Endothelial cell of umbilical vein (primary cell): ENCODE measurements at regions of chr3 and their contacts with region 1.

Region 1: GRCh38 chr3:33372218-33373081 is 67.8 kb downstream of the UBP1 start:
- DNase-seq: peak; percentile 71
- H3K4me3 ChIP-seq: no peak overlapping the region
- H3K27ac ChIP-seq: no peak overlapping the region
- H3K4me1 ChIP-seq: peaks cover 6% of the 10 kb centered on the region
- H3K27me3 ChIP-seq: no peaks in the 10 kb centered on the region
- CTCF ChIP-seq: peak; percentile 81 to 82
- POLR2A ChIP-seq: no peak

Region 2: DNA sequence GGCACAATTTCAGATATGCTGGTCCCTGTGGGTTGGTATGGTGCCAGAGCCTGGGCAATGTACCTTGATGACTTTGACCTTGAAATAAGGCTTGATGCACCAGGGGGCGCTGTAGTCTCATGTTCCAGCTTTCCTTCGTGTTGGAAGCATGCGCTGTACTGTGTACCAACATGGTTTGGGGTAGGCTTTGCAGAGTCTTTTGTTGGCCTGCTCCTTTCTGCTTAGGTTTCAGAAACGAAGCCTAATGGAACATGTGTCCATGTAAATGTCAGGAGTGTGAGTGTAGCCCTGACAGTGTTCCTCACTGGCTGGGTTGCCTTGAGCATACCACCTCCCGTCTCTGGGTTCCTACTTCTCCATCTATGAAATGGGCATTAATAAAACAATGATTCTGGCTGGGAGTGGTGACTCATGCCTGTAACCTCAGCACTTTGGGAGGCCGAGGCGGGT is 424.6 kb before region 1 on chr3:
- CTCF ChIA-PET with region 1: interaction called, 45 read pairs
- POLR2A ChIA-PET with region 1: no interaction called
- dilution Hi-C with region 1: no loop called
- intact Hi-C with region 1: no loop called
- DNase-seq: peak; percentile 85
- H3K4me3 ChIP-seq: no peak overlapping the region
- H3K27ac ChIP-seq: no peak overlapping the region
- H3K4me1 ChIP-seq: peaks cover 5% of the 10 kb centered on the region
- H3K27me3 ChIP-seq: no peaks in the 10 kb centered on the region
- CTCF ChIP-seq: peak; percentile 73 to 84
- POLR2A ChIP-seq: no peak

Region 3: DNA sequence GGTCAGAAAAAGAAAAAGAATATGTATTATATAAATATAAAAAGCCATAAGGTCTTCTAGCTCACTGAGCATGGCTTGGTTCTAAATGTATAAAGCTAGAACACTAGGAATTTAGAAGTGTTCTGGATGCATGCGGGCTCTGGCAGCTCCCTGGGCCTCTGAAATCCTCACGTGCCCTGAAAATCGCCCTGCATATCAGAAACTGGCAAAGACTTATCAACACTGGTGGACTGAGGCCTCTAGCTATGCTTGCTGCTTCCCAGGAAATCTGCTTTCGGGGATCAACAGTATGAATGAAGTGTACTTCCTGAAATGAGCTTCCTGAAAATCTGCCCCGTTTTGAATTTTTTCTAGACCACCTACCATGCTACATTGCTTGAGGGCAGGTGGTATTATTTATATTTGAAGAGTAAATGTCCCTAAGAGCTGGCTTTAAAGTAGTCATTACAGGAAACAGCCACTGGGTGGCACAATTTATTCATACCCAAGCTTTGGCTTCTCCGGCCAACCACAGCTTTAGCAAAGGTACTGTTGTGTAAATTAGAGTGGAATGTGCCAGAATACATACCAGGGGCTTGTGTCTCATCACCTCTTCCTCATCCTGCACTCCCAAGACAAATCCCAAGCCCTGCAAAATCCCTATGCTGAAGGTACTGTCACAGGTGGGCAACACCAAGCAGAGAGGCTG is 241.0 kb before region 1 on chr3:
- CTCF ChIA-PET with region 1: interaction called, 639 read pairs
- POLR2A ChIA-PET with region 1: interaction called, 9 read pairs
- dilution Hi-C with region 1: no loop called
- intact Hi-C with region 1: loop called (anchors 1 kb)
- DNase-seq: peak; percentile 76
- H3K4me3 ChIP-seq: no peak overlapping the region
- H3K27ac ChIP-seq: no peak overlapping the region
- H3K4me1 ChIP-seq: peaks cover 9% of the 10 kb centered on the region
- H3K27me3 ChIP-seq: no peaks in the 10 kb centered on the region
- CTCF ChIP-seq: peak; percentile 51 to 62
- POLR2A ChIP-seq: no peak

Region 4: DNA sequence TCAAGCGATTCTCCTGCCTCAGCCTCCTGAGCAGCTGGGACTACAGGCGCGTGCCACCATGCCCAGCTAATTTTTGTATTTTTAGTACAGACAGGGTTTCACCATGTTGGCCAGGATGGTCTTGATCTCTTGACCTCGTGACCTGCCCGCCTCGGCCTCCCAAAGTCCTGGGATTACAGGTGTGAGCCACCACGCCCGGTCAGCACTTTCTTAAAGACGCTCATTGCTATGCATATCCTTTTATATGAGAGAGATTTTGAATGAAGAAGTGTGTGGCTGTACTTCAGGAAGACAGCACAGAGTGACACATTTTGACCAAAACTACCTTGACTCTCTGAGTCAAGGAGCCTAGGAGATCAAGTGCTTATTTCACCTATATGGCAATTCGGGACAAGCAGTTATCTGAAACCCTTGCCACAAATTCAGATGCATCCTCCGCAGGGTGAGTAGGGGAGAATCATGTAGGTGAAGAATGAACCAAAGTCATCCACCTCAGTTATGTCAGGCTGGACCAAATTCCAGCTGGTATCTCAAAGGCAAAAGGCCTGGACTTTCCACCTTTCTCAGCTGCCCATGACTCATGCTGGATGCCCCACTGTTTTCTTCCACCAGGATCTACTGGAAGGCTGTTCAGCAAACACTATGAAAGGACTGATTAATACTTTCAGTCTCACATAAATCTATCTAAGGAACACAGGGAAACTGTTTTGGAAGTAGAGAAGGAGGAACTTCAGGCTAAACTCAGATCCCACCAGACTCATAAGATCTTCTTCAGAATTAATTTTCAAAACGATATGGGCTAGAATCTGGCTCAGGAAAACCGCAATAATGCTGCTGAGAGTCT is 185.7 kb before region 1 on chr3:
- CTCF ChIA-PET with region 1: interaction called, 10 read pairs
- POLR2A ChIA-PET with region 1: interaction called, 3 read pairs
- dilution Hi-C with region 1: no loop called
- intact Hi-C with region 1: no loop called
- DNase-seq: peak; percentile 93
- H3K4me3 ChIP-seq: peak overlapping the region in 1 of 3 experiments; percentile 28
- H3K27ac ChIP-seq: peak overlapping the region; percentile 92
- H3K4me1 ChIP-seq: peaks cover 11% of the 10 kb centered on the region
- H3K27me3 ChIP-seq: no peaks in the 10 kb centered on the region
- CTCF ChIP-seq: no peak
- POLR2A ChIP-seq: no peak

Region 5: DNA sequence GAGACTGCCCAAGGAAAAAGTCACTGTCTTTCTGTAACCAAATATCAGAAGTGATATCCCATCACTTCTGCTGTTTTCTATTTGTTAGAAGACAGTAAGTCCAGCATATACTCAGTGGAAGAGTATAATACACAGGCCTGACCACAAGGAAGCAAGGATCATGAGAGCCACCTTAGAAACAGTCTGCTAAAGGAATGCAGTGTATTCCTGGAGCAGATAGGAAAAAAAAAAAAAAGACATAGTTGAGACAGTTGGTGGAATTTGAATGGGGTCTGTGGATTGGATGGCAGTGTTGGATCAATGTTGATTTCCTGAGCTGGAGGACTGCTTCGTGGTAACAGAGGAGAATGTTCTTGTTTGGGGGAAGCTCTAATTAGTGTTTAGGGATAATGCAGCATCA is 121.7 kb before region 1 on chr3:
- CTCF ChIA-PET with region 1: interaction called, 20 read pairs
- POLR2A ChIA-PET with region 1: no interaction called
- dilution Hi-C with region 1: no loop called
- intact Hi-C with region 1: no loop called
- DNase-seq: no peak
- H3K4me3 ChIP-seq: no peak overlapping the region
- H3K27ac ChIP-seq: no peak overlapping the region
- H3K4me1 ChIP-seq: no peaks in the 10 kb centered on the region
- H3K27me3 ChIP-seq: no peaks in the 10 kb centered on the region
- CTCF ChIP-seq: no peak
- POLR2A ChIP-seq: no peak

Region 6: GRCh38 chr3:33313331-33313730 is 59.1 kb before region 1 on chr3:
- CTCF ChIA-PET with region 1: interaction called, 29 read pairs
- POLR2A ChIA-PET with region 1: no interaction called
- dilution Hi-C with region 1: no loop called
- intact Hi-C with region 1: no loop called
- DNase-seq: no peak
- H3K4me3 ChIP-seq: no peak overlapping the region
- H3K27ac ChIP-seq: peak overlapping the region; percentile 29
- H3K4me1 ChIP-seq: peaks cover 62% of the 10 kb centered on the region
- H3K27me3 ChIP-seq: no peaks in the 10 kb centered on the region
- CTCF ChIP-seq: no peak
- POLR2A ChIP-seq: no peak

Region 7: GRCh38 chr3:33360136-33360825 is 12.2 kb before region 1 on chr3:
- CTCF ChIA-PET with region 1: interaction called, 40 read pairs
- POLR2A ChIA-PET with region 1: interaction called, 5 read pairs
- dilution Hi-C with region 1: no loop called
- intact Hi-C with region 1: no loop called
- DNase-seq: peak; percentile 63
- H3K4me3 ChIP-seq: no peak overlapping the region
- H3K27ac ChIP-seq: peak overlapping the region; percentile 75
- H3K4me1 ChIP-seq: peaks cover 18% of the 10 kb centered on the region
- H3K27me3 ChIP-seq: no peaks in the 10 kb centered on the region
- CTCF ChIP-seq: no peak
- POLR2A ChIP-seq: no peak